PC-9 (cell line): ENCODE measurements at regions of chr3 and their contacts with region 1.

Region 1: GRCh38 chr3:124878561-124879336 is 8.4 kb downstream of the ITGB5 start:
- DNase-seq: peak; percentile 80 to 98
- H3K4me3 ChIP-seq: peak overlapping the region; percentile 13; the same call in 1 of the 2 replicates
- H3K27ac ChIP-seq: peak overlapping the region; percentile 85
- H3K4me1 ChIP-seq: peaks cover 84% of the 10 kb centered on the region
- H3K27me3 ChIP-seq: no peaks in the 10 kb centered on the region
- CTCF ChIP-seq: no peak

Region 2: DNA sequence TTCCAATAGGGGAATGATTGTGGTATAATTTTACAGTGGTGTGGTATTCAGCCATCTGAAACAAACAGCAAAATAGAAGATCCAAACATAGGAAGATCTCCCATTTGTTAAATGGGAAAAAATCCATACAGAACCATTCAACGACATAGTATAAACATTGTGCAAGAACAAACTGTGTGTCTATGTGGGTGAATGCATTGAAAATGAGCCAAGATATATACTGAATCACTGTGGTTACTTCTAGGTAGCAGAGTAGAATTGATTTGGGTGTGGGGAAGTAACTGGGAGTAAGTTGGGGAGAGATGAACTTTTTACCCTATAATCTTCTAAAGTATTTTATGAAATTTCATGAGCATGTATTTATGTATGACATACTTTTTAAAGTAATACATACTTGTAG is 271.6 kb before region 1 on chr3:
- CTCF ChIA-PET with region 1: no interaction called
- POLR2A ChIA-PET with region 1: no interaction called
- intact Hi-C with region 1: no loop called
- DNase-seq: peak in 1 of 2 experiments; percentile 72
- H3K4me3 ChIP-seq: no peak overlapping the region
- H3K27ac ChIP-seq: no peak overlapping the region
- H3K4me1 ChIP-seq: peaks cover 15% of the 10 kb centered on the region
- H3K27me3 ChIP-seq: no peaks in the 10 kb centered on the region
- CTCF ChIP-seq: no peak

Region 3: GRCh38 chr3:124774327-124774718 is 104.4 kb before region 1 on chr3:
- CTCF ChIA-PET with region 1: no interaction called
- POLR2A ChIA-PET with region 1: interaction called, 18 read pairs
- intact Hi-C with region 1: no loop called
- DNase-seq: peak in 1 of 2 experiments; percentile 57
- H3K4me3 ChIP-seq: no peak overlapping the region
- H3K27ac ChIP-seq: no peak overlapping the region
- H3K4me1 ChIP-seq: peaks cover 5% of the 10 kb centered on the region; the same call in 1 of the 2 replicates
- H3K27me3 ChIP-seq: no peaks in the 10 kb centered on the region
- CTCF ChIP-seq: no peak

Region 4: GRCh38 chr3:124812291-124813265 is 66.2 kb before region 1 on chr3:
- CTCF ChIA-PET with region 1: interaction called, 7 read pairs
- POLR2A ChIA-PET with region 1: no interaction called
- intact Hi-C with region 1: loop called (anchors 1 kb)
- DNase-seq: peak; percentile 92 to 95
- H3K4me3 ChIP-seq: peak overlapping the region; percentile 35; the same call in 1 of the 2 replicates
- H3K27ac ChIP-seq: peak overlapping the region; percentile 96
- H3K4me1 ChIP-seq: peaks cover 52% of the 10 kb centered on the region
- H3K27me3 ChIP-seq: no peaks in the 10 kb centered on the region
- CTCF ChIP-seq: no peak

Region 5: DNA sequence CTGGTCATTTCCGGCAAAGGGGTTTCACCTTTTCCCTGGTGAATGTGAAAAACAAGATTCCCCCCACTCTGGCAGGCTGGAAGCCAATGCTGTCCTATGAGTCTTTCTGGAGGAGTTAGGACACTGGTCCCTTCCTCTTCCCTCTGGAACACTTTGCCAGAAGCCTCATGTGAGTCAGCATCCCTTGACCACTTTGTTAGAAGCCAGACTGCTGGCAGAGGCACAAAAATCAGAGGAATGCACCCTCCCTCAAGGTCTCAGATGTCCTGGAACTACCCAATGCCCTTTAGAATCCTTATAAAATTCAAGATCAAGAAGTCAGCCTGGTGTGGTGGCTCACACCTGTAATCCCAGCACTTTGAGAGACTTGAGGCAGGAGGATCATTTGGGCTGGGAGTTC is 18.1 kb before region 1 on chr3:
- CTCF ChIA-PET with region 1: no interaction called
- POLR2A ChIA-PET with region 1: no interaction called
- intact Hi-C with region 1: loop called (anchors 1 kb)
- DNase-seq: peak; percentile 86 to 95
- H3K4me3 ChIP-seq: no peak overlapping the region
- H3K27ac ChIP-seq: peak overlapping the region; percentile 65
- H3K4me1 ChIP-seq: peaks cover 26% of the 10 kb centered on the region
- H3K27me3 ChIP-seq: no peaks in the 10 kb centered on the region
- CTCF ChIP-seq: no peak

Region 6: GRCh38 chr3:125651244-125651643 is 772.5 kb after region 1 on chr3:
- CTCF ChIA-PET with region 1: no interaction called
- POLR2A ChIA-PET with region 1: interaction called, 11 read pairs
- intact Hi-C with region 1: no loop called
- DNase-seq: peak in 1 of 2 experiments; percentile 66
- H3K4me3 ChIP-seq: no peak overlapping the region
- H3K27ac ChIP-seq: peak overlapping the region; percentile 52
- H3K4me1 ChIP-seq: peaks cover 42% of the 10 kb centered on the region
- H3K27me3 ChIP-seq: no peaks in the 10 kb centered on the region
- CTCF ChIP-seq: no peak